Dorsolateral prefrontal cortex (tissue), 120 donors: ENCODE measurements at regions of chr2 and their contacts with region 1.

Region 1: GRCh38 chr2:71157124-71157793 is 26.8 kb downstream of the MPHOSPH10 start:
- DNase-seq: peak in 9 of 10 donors; percentile 47 to 77 (median 64)
- H3K4me3 ChIP-seq: peak overlapping the region in 42 of 59 donors; percentile 6 to 54 (median 28)
- H3K27ac ChIP-seq: no peak overlapping the region
- H3K27me3 ChIP-seq: no peaks in the 10 kb centered on the region
- CTCF ChIP-seq: peak; percentile 55 to 85 (median 72)

Region 2: GRCh38 chr2:71299507-71299906 is 142.2 kb after region 1 on chr2:
- intact Hi-C with region 1: loop called in 1 of 2 experiments (anchors 10 kb)
- DNase-seq: no peak
- H3K4me3 ChIP-seq: no peak overlapping the region
- H3K27ac ChIP-seq: peak overlapping the region in 13 of 59 donors; percentile 7 to 65 (median 33)
- H3K27me3 ChIP-seq: no peaks in the 10 kb centered on the region
- CTCF ChIP-seq: peak; percentile 60 to 90 (median 78)

Region 3: GRCh38 chr2:71426721-71427120 is 269.5 kb after region 1 on chr2:
- intact Hi-C with region 1: no loop called
- DNase-seq: no peak
- H3K4me3 ChIP-seq: no peak overlapping the region
- H3K27ac ChIP-seq: no peak overlapping the region
- H3K27me3 ChIP-seq: no peaks in the 10 kb centered on the region
- CTCF ChIP-seq: no peak

Region 4: DNA sequence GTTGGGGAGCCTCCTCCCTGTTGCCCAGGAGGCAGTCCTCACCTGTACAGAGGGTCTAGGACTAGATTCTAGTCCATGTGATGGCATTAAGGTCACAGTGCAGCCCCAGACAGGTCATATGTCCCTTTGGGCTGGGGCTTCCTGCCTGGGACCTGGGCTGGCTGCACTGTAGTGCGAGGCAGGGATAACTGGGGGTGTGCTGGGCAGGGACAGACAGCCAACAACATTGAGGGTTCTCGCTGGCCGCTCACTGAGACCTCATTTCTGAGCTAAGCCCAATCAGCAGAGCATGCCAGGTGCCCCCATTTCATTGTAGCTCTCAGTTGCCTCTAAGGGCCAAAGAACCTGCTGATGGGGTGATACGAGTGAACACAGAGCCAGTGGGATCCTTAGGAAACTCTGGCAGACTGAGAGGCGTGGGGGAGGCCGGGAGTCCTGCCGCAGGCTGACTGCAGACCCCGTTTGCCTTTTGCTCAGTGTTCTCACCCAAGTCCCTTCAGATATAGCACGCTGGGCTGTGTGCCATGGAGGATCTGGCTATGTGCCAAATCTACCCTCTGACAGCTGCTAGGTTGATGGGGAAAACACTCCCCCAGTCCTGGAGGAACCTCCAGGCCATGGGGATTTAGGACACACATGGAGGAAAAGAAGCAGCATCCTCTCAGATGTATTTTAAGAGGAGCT is 348.0 kb after region 1 on chr2:
- intact Hi-C with region 1: loop called (anchors 2 to 10 kb)
- DNase-seq: peak in 2 of 10 donors; percentile 21 to 63
- H3K4me3 ChIP-seq: no peak overlapping the region
- H3K27ac ChIP-seq: peak overlapping the region in 1 of 59 donors; percentile 33
- H3K27me3 ChIP-seq: no peaks in the 10 kb centered on the region
- CTCF ChIP-seq: no peak